OCI-LY7 (cell line): ENCODE measurements at regions of chr1 and their contacts with region 1.

Region 1: DNA sequence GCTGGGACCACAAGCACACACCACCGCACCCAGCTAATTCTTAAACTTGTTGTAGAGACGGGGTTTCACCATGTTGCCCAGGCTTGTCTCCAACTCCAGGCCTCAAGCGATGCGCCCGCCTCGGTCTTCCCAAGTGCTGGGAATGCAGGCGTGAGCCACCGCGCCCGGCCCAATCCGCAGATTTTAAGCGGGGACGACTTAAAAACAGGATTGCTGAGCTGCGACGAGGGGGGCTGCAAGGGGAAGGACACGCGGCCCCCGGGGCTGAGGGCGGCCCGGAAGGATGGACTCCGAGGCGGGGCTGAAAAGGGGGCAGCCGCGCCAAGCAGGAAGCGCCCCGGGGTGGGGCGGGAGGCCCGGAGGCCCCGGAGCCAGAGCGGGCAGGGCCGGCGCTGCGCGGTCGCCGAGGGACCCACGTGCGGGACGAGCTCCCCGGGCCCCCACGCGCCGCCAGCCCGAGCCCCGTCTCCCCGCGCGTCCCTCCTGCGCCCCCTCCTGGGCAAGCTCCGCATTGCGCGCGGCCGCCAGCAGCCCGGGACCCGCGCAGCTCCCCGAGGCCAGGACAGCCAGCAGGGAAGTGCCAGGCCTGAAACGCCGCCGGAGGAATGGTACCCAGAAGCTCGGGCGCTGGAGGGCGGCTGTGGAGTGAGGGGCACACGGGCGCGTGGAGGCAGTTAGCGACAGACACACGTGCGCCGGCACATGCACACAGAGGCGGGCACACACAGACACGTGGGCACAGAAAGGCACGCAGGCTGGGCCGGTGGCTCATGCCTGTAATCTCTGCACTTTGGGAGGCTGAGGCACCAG is 5.5 kb upstream of the PRKCZ start:
- DNase-seq: peak; percentile 59
- H3K4me3 ChIP-seq: no peak overlapping the region
- H3K27ac ChIP-seq: no peak overlapping the region
- H3K4me1 ChIP-seq: peaks cover 5% of the 10 kb centered on the region
- CTCF ChIP-seq: peak; percentile 76

Region 2: GRCh38 chr1:1943834-1944570 is 100.7 kb before region 1 on chr1:
- CTCF ChIA-PET with region 1: interaction called, 3 read pairs
- POLR2A ChIA-PET with region 1: no interaction called
- intact Hi-C with region 1: loop called (anchors 5 kb)
- DNase-seq: peak; percentile 46
- H3K4me3 ChIP-seq: no peak overlapping the region
- H3K27ac ChIP-seq: no peak overlapping the region
- H3K4me1 ChIP-seq: peaks cover 13% of the 10 kb centered on the region
- CTCF ChIP-seq: peak; percentile 80

Region 3: GRCh38 chr1:1959840-1960479 is 84.8 kb before region 1 on chr1:
- CTCF ChIA-PET with region 1: interaction called, 5 read pairs
- POLR2A ChIA-PET with region 1: no interaction called
- intact Hi-C with region 1: loop called (anchors 1 kb)
- DNase-seq: peak; percentile 76
- H3K4me3 ChIP-seq: no peak overlapping the region
- H3K27ac ChIP-seq: no peak overlapping the region
- H3K4me1 ChIP-seq: no peaks in the 10 kb centered on the region
- CTCF ChIP-seq: peak; percentile 89

Region 4: DNA sequence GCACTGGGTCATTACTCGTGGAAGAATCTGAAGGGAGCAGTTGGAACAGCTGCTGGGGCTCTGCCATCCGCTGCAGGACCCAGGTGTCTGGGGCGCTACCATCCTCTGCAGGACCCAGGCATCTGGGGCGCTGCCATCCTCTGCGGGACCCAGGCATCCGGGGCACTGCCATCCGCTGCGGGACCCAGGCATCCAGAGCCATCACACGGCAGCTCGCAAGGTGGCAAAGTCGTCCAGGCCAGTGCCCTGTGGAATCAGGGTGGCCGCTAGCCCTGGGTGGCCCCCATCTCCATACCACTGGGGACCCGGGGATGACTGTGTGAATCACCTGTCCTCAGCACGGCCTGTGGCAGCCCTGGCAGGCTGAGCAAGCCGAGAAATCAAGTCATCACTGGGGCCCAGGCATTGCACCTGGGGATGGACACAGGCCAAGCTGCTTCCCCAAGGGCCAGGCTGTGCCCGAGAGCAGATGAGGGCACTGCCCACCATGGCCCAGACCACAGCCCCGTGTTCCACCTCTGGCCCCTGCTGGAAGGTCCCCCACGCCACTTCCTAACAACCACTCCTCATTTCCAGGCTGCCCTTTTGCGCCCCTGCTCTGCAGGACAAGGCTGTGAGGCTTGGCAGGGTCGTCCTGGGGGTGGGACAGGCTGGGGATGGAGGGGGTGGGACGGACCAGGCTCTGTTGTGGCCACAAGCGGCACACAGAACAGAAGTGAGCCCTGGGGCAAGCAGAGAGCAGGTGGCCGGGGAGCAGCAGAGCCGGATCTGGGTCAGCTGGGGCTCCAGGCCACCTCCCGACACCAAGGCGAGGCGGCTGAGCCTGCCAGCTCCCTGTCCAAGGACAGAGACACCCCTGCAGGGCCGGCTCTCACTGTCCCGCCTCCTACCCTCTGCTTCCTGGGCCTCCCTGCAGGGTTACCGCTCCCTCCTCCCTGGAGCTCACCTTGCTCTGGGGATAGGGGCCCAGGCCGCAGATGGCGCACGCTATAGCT is 12.9 kb before region 1 on chr1:
- CTCF ChIA-PET with region 1: no interaction called
- POLR2A ChIA-PET with region 1: no interaction called
- intact Hi-C with region 1: no loop called
- DNase-seq: no peak
- H3K4me3 ChIP-seq: no peak overlapping the region
- H3K27ac ChIP-seq: no peak overlapping the region
- H3K4me1 ChIP-seq: peaks cover 9% of the 10 kb centered on the region
- CTCF ChIP-seq: no peak